Naive thymus-derived CD4-positive, alpha-beta T cell (primary cell): ENCODE measurements at regions of chr17 and their contacts with region 1.

Region 1: GRCh38 chr17:50087246-50087911 is 7.8 kb upstream of the PDK2 start:
- DNase-seq: peak; percentile 45 to 82 (median 66)
- ATAC-seq: peak; percentile 94
- H3K4me3 ChIP-seq: no peak overlapping the region
- H3K4me3 Mint-ChIP-seq: no peak overlapping the region
- H3K27ac ChIP-seq: no peak overlapping the region
- H3K27ac Mint-ChIP-seq: no peak overlapping the region
- H3K4me1 ChIP-seq: no peaks in the 10 kb centered on the region
- H3K4me1 Mint-ChIP-seq: no peaks in the 10 kb centered on the region
- H3K27me3 ChIP-seq: no peaks in the 10 kb centered on the region
- H3K27me3 Mint-ChIP-seq: no peaks in the 10 kb centered on the region

Region 2: GRCh38 chr17:49707608-49708514 is 379.5 kb before region 1 on chr17 and contains the start of gene SLC35B1:
- CTCF ChIA-PET with region 1: no interaction called
- POLR2A ChIA-PET with region 1: no interaction called
- intact Hi-C with region 1: no loop called
- DNase-seq: peak; percentile 89 to 99 (median 97)
- ATAC-seq: peak; percentile 98
- H3K4me3 ChIP-seq: peak within 1 kb of the TSS; percentile 96
- H3K4me3 Mint-ChIP-seq: peak within 1 kb of the TSS; percentile 91 to 97 (median 96)
- H3K27ac ChIP-seq: peak within 1 kb of the TSS; percentile 94
- H3K27ac Mint-ChIP-seq: peak within 1 kb of the TSS; percentile 89 to 99 (median 96)
- H3K4me1 ChIP-seq: peaks cover 22 to 27% of the 10 kb centered on the region in 2 donors
- H3K4me1 Mint-ChIP-seq: peaks cover 30 to 47% (median 42%) of the 10 kb centered on the region in 7 donors
- H3K27me3 ChIP-seq: no peaks in the 10 kb centered on the region
- H3K27me3 Mint-ChIP-seq: no peaks in the 10 kb centered on the region
- total RNA-seq, gene SLC35B1: 42.1 to 83.0 (median 49.0) TPM

Region 3: GRCh38 chr17:50020841-50021599 is 66.4 kb before region 1 on chr17:
- CTCF ChIA-PET with region 1: interaction called, 91 read pairs
- POLR2A ChIA-PET with region 1: no interaction called
- intact Hi-C with region 1: no loop called
- DNase-seq: no peak
- ATAC-seq: no peak
- H3K4me3 ChIP-seq: no peak overlapping the region
- H3K4me3 Mint-ChIP-seq: no peak overlapping the region
- H3K27ac ChIP-seq: no peak overlapping the region
- H3K27ac Mint-ChIP-seq: no peak overlapping the region
- H3K4me1 ChIP-seq: no peaks in the 10 kb centered on the region
- H3K4me1 Mint-ChIP-seq: no peaks in the 10 kb centered on the region
- H3K27me3 ChIP-seq: no peaks in the 10 kb centered on the region
- H3K27me3 Mint-ChIP-seq: peaks cover 0 to 26% (median 14%) of the 10 kb centered on the region in 5 donors

Region 4: DNA sequence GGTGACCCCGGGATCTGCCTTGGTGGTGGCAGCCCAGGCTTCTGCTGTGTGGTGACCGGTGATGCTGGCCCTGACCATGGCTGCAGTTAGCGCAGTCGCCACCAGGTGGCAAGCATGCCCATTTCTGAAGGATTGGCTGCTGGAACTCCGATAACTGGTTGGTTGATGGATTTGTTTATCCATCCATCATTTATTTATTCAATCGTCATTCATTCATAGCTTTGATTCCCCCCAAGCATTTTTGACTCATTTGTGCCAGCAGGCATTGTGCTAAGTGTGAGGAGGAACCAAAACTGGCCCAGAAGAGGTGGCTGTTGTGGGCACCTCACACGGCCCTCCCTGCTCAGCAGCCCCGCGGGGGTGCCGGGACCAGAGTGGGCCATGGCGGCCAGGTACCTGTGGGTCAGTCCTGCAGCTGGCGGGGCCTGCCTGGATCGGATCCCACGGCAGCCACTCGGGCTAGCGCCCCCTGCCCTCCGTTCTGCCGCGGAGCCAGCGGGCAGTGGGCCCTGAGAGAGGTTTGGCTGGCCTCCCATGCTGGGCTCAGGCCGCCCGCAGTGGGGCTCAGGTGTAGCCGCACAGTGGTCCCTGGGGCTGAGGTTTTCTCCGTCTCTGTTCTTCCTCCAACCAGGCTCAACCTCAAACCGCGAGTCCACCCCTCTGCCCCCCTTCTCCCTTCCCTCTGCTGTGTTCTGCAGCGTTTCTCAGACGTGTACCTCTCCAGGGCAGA is 60.3 kb before region 1 on chr17:
- CTCF ChIA-PET with region 1: interaction called, 91 read pairs
- POLR2A ChIA-PET with region 1: interaction called, 7 read pairs
- intact Hi-C with region 1: loop called in 1 of 2 experiments (anchors 1 kb)
- DNase-seq: peak; percentile 33 to 81 (median 69)
- ATAC-seq: peak; percentile 80
- H3K4me3 ChIP-seq: no peak overlapping the region
- H3K4me3 Mint-ChIP-seq: peak overlapping the region in 7 of 10 donors; percentile 17 to 74 (median 54)
- H3K27ac ChIP-seq: no peak overlapping the region
- H3K27ac Mint-ChIP-seq: no peak overlapping the region
- H3K4me1 ChIP-seq: peaks cover 0 to 8% of the 10 kb centered on the region in 2 donors
- H3K4me1 Mint-ChIP-seq: peaks cover 5 to 13% (median 10%) of the 10 kb centered on the region in 7 donors
- H3K27me3 ChIP-seq: peaks cover 0 to 6% of the 10 kb centered on the region in 2 donors
- H3K27me3 Mint-ChIP-seq: peaks cover 20 to 33% (median 25%) of the 10 kb centered on the region in 5 donors

Region 5: DNA sequence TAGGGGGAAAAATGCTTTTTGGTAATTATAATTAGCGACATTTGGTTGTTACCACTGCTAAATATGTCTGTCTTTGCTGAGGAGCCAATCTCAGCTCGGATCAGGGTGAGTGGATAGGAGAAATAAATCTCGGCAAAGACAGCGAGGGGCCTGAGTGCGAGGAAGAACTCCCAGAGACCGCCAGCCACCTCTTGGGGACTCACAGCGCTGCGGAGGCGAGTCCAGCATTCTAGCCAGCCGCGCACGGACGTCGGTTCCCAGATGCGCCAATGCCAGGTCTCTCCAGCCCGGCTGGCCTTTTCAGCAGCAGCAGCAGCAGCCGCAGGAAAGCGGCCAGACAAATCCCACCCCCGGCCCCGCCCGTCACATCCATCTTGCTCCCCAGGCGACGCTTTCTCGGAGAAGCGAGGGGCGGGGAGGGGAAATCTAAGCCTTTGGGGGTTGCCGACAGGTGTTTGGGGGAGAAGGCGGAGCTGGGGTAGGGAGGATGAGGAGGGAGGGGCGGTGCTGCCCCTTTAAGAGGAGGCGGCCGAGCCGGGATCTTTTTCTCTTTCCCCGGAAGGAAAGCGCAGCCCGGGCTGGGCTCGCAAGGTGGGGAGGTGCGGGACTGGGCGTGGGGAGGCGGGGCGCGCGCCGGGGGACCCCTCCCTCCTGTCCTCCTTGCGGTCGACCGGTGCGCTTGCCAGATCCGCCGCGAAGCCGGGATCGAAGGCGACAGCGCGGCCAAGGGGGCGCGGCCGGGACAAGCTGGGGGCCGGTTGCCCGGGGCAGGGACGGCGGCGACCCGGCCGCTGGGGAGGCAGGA is 31.8 kb before region 1 on chr17 and contains the start of gene ITGA3:
- CTCF ChIA-PET with region 1: interaction called, 4 read pairs
- POLR2A ChIA-PET with region 1: no interaction called
- intact Hi-C with region 1: loop called (anchors 1 to 2 kb)
- DNase-seq: peak; percentile 28 to 78 (median 45)
- ATAC-seq: peak; percentile 76
- H3K4me3 ChIP-seq: peak within 1 kb of the TSS; percentile 60
- H3K4me3 Mint-ChIP-seq: peak within 1 kb of the TSS; percentile 84 to 96 (median 92)
- H3K27ac ChIP-seq: peak within 1 kb of the TSS; percentile 54
- H3K27ac Mint-ChIP-seq: peak within 1 kb of the TSS; percentile 38 to 90 (median 82)
- H3K4me1 ChIP-seq: peaks cover 0 to 7% of the 10 kb centered on the region in 2 donors
- H3K4me1 Mint-ChIP-seq: peaks cover 12 to 48% (median 20%) of the 10 kb centered on the region in 7 donors
- H3K27me3 ChIP-seq: no peaks in the 10 kb centered on the region
- H3K27me3 Mint-ChIP-seq: peaks cover 0 to 7% (median 0%) of the 10 kb centered on the region in 5 donors
- total RNA-seq, gene ITGA3: 4.0 to 14.6 (median 8.6) TPM